MCF 10A (cell line): ENCODE measurements at regions of chr18 and their contacts with region 1.

Region 1: DNA sequence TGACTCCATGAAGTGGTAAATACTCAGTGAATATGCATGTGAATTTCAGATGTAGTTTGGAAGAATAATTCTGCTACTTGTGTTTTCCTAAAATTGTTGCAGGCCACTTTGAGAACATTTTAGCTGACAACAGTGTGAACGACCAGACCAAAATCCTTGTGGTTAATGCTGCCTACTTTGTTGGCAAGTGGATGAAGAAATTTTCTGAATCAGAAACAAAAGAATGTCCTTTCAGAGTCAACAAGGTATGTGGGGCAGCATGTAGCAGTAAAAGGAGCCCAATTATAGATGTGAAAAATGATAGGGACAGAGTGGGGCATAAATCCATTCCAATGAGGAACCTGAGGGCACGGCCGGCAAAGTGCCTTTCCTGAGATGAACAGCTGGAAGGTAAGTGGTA is 16.1 kb downstream of the SERPINB5 start:
- DNase-seq: no peak
- H3K4me3 Mint-ChIP-seq: no peak overlapping the region
- H3K27ac Mint-ChIP-seq: peak overlapping the region; percentile 31
- H3K4me1 Mint-ChIP-seq: peaks cover 12% of the 10 kb centered on the region
- H3K27me3 Mint-ChIP-seq: no peaks in the 10 kb centered on the region
- CTCF ChIP-seq: no peak

Region 2: GRCh38 chr18:63505566-63506335 is 12.9 kb after region 1 on chr18:
- CTCF ChIA-PET with region 1: interaction called, 17 read pairs
- POLR2A ChIA-PET with region 1: interaction called, 11 read pairs
- intact Hi-C with region 1: no loop called
- DNase-seq: peak; percentile 72
- H3K4me3 Mint-ChIP-seq: no peak overlapping the region
- H3K27ac Mint-ChIP-seq: peak overlapping the region; percentile 77
- H3K4me1 Mint-ChIP-seq: peaks cover 6% of the 10 kb centered on the region
- H3K27me3 Mint-ChIP-seq: no peaks in the 10 kb centered on the region
- CTCF ChIP-seq: peak; percentile 67

Region 3: GRCh38 chr18:63511286-63511685 is 18.4 kb after region 1 on chr18:
- CTCF ChIA-PET with region 1: interaction called, 17 read pairs
- POLR2A ChIA-PET with region 1: interaction called, 11 read pairs
- intact Hi-C with region 1: no loop called
- DNase-seq: peak; percentile 75
- H3K4me3 Mint-ChIP-seq: no peak overlapping the region
- H3K27ac Mint-ChIP-seq: no peak overlapping the region
- H3K4me1 Mint-ChIP-seq: peaks cover 6% of the 10 kb centered on the region
- H3K27me3 Mint-ChIP-seq: no peaks in the 10 kb centered on the region
- CTCF ChIP-seq: peak; percentile 39

Region 4: DNA sequence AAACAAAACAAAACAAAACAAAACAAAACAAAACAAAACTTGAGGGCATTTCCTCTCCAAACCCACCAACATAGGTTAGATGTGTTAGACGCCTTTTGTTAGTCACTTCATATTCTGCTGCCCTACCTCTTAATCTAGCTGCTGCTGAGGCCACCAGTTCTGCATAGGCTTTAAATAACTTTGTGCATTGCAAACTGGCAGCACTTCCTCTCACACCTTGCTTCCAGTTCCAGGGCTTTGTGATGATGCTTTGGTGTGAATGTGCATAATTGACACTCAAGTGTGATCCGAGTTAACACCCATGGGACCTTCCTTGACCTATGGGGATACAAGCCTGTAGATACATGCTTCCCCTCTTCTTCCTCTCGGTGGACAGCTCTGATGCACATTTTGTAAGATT is 207.7 kb after region 1 on chr18:
- CTCF ChIA-PET with region 1: no interaction called
- POLR2A ChIA-PET with region 1: no interaction called
- intact Hi-C with region 1: no loop called
- DNase-seq: no peak
- H3K4me3 Mint-ChIP-seq: no peak overlapping the region
- H3K27ac Mint-ChIP-seq: no peak overlapping the region
- H3K4me1 Mint-ChIP-seq: no peaks in the 10 kb centered on the region
- H3K27me3 Mint-ChIP-seq: no peaks in the 10 kb centered on the region
- CTCF ChIP-seq: no peak